Activated T-helper 2 cell treated with anti-CD3 and anti-CD28 coated beads, Interferon-gamma antibody, Interleukin-2, Interleukin-4, amounts not matched to agents 10 μg/mL and 5 μg/mL and 100 μg/mL, durations not matched to agents 14 hours and 24 hours and 36 hours (primary cell): ENCODE measurements at regions of chr2 and their contacts with region 1.

Region 1: GRCh38 chr2:157898591-157898996 is 22.5 kb upstream of the ACVR1 start:
- DNase-seq: peak; percentile 44
- H3K4me3 Mint-ChIP-seq: peak overlapping the region; percentile 86
- H3K27ac Mint-ChIP-seq: peak overlapping the region; percentile 98
- H3K4me1 Mint-ChIP-seq: peaks cover 74% of the 10 kb centered on the region
- H3K27me3 Mint-ChIP-seq: no peaks in the 10 kb centered on the region

Region 2: GRCh38 chr2:157413326-157414035 is 485.1 kb before region 1 on chr2:
- intact Hi-C with region 1: loop called (anchors 1 kb)
- DNase-seq: peak; percentile 59
- H3K4me3 Mint-ChIP-seq: peak overlapping the region; percentile 74
- H3K27ac Mint-ChIP-seq: peak overlapping the region; percentile 96
- H3K4me1 Mint-ChIP-seq: peaks cover 74% of the 10 kb centered on the region
- H3K27me3 Mint-ChIP-seq: no peaks in the 10 kb centered on the region

Region 3: GRCh38 chr2:157480182-157480961 is 418.2 kb before region 1 on chr2:
- intact Hi-C with region 1: loop called (anchors 5 kb)
- DNase-seq: no peak
- H3K4me3 Mint-ChIP-seq: peak overlapping the region; percentile 68
- H3K27ac Mint-ChIP-seq: peak overlapping the region; percentile 91
- H3K4me1 Mint-ChIP-seq: peaks cover 70% of the 10 kb centered on the region
- H3K27me3 Mint-ChIP-seq: no peaks in the 10 kb centered on the region

Region 4: DNA sequence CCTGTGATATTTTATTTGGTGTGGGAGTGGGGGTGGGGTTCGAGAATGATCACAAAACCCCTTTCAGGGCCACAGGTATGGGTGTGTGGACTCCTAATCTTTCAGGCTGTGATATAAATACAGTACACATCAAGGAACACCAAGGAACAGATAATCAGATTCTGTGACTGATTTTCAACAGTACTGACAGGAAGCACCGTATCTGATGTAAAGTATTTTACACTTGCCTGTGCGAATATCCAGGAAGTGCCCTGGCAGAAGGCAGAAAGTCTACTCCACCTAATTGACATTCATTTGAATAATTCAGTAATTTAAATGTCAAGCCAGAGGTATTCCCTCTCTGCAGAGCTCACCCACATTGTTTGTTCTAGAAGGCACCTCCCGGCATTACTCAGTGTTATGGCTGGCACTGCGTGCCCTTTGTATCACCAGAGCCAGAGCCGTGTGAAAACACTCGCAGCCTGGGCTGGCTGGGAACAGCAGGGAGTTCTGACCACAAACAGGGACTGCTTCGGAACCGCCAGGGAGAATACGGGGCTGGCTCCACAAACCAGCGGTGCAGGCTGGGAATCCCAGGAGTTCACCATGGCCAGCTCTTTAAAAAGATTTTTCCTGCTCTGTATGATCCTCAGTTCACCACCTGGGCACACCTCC is 114.3 kb before region 1 on chr2:
- intact Hi-C with region 1: loop called (anchors 1 kb)
- DNase-seq: no peak
- H3K4me3 Mint-ChIP-seq: no peak overlapping the region
- H3K27ac Mint-ChIP-seq: peak overlapping the region; percentile 74
- H3K4me1 Mint-ChIP-seq: peaks cover 69% of the 10 kb centered on the region
- H3K27me3 Mint-ChIP-seq: no peaks in the 10 kb centered on the region

Region 5: DNA sequence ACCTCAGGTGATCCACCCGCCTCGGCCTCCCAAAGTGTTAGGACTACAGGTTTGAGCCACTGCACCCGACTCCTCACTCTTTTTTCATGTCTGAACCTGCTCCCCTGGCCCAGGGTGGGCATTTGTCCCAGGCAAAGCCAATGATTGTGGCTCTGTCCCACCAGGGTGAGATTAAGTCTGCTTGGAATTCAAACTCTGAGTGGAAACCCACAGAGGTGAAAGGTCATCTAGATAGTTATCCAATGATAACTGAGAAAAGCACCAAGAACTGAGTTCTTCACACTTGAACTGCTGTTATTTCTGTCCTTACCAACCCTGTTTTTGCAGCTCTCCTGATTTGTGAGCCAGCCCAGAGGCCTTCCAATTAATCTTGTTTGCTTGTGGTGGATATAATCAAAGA is 40.0 kb after region 1 on chr2:
- intact Hi-C with region 1: loop called (anchors 2 kb)
- DNase-seq: no peak
- H3K4me3 Mint-ChIP-seq: no peak overlapping the region
- H3K27ac Mint-ChIP-seq: peak overlapping the region; percentile 51
- H3K4me1 Mint-ChIP-seq: peaks cover 3% of the 10 kb centered on the region
- H3K27me3 Mint-ChIP-seq: no peaks in the 10 kb centered on the region

Region 6: DNA sequence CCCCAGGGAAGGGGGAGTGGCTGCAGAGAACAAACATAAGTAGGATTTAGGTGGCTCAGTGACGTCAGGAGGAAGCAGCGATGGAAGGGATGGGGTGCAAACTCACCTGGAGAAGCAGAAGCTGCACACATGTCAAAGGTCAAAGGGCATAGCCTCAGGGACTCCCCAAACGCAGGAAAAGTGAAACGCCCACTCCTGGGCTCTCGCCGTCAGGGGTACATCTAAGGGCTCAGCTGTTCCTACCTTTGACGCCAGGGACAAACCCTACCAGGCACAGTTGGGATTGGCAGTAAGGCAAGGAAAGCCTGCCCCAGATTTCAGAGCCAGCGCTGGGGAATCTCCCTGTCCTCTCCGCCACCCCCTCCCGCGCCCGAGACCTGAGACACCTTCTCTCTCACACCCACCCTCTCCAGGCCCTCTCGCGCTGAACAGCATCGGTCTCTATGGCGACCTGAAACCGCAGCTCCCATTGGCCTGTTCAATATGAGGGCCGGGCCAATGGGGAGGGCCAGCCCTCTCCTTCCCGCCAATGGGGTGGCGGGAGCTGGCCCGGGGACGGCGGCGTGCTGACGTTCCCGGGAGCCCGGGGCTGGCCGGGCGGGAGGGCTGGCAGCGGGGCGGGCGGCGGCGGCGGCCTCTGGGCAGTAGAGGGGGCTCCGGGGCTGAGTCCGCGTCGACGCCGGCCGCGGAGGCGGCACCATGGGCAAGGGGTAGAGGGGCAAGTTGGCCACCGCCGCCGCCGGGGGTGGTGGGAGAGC is 557.9 kb after region 1 on chr2 and contains the starts of genes CCDC148 and PKP4:
- intact Hi-C with region 1: loop called (anchors 5 kb)
- DNase-seq: peak; percentile 83
- H3K4me3 Mint-ChIP-seq: peak within 1 kb of the TSS; percentile 94
- H3K27ac Mint-ChIP-seq: peak within 1 kb of the TSS; percentile 86
- H3K4me1 Mint-ChIP-seq: peaks cover 22% of the 10 kb centered on the region
- H3K27me3 Mint-ChIP-seq: peaks cover 38% of the 10 kb centered on the region
- total RNA-seq, gene CCDC148: not detected in 2 replicates
- total RNA-seq, gene PKP4: 26.9 and 27.0 TPM in 2 replicates